Activated CD4-positive, alpha-beta memory T cell treated with anti-CD3 and anti-CD28 coated beads for 36 hours (primary cell): ENCODE measurements at regions of chr5 and their contacts with region 1.

Region 1: GRCh38 chr5:33588654-33589372 is 148.0 kb downstream of the TARS1 start:
- DNase-seq: peak; percentile 59
- H3K4me3 Mint-ChIP-seq: no peak overlapping the region
- H3K27ac Mint-ChIP-seq: no peak overlapping the region
- H3K4me1 Mint-ChIP-seq: no peaks in the 10 kb centered on the region
- H3K27me3 Mint-ChIP-seq: no peaks in the 10 kb centered on the region

Region 2: GRCh38 chr5:33576726-33577590 is 11.9 kb before region 1 on chr5:
- CTCF ChIA-PET with region 1: interaction called, 20 read pairs
- POLR2A ChIA-PET with region 1: no interaction called
- intact Hi-C with region 1: no loop called
- DNase-seq: no peak
- H3K4me3 Mint-ChIP-seq: no peak overlapping the region
- H3K27ac Mint-ChIP-seq: no peak overlapping the region
- H3K4me1 Mint-ChIP-seq: no peaks in the 10 kb centered on the region
- H3K27me3 Mint-ChIP-seq: peaks cover 5% of the 10 kb centered on the region

Region 3: GRCh38 chr5:33936004-33936380 is 347.2 kb after region 1 on chr5:
- CTCF ChIA-PET with region 1: interaction called, 30 read pairs
- POLR2A ChIA-PET with region 1: no interaction called
- intact Hi-C with region 1: loop called (anchors 1 kb)
- DNase-seq: peak; percentile 61
- H3K4me3 Mint-ChIP-seq: no peak overlapping the region
- H3K27ac Mint-ChIP-seq: no peak overlapping the region
- H3K4me1 Mint-ChIP-seq: peaks cover 2% of the 10 kb centered on the region
- H3K27me3 Mint-ChIP-seq: peaks cover 48% of the 10 kb centered on the region

Region 4: GRCh38 chr5:33969572-33970452 is 381.0 kb after region 1 on chr5:
- CTCF ChIA-PET with region 1: interaction called, 8 read pairs
- POLR2A ChIA-PET with region 1: no interaction called
- intact Hi-C with region 1: loop called (anchors 1 kb)
- DNase-seq: no peak
- H3K4me3 Mint-ChIP-seq: no peak overlapping the region
- H3K27ac Mint-ChIP-seq: no peak overlapping the region
- H3K4me1 Mint-ChIP-seq: peaks cover 14% of the 10 kb centered on the region
- H3K27me3 Mint-ChIP-seq: no peaks in the 10 kb centered on the region